AG04449 (cell line): ENCODE measurements at regions of chr7 and their contacts with region 1.

Region 1: DNA sequence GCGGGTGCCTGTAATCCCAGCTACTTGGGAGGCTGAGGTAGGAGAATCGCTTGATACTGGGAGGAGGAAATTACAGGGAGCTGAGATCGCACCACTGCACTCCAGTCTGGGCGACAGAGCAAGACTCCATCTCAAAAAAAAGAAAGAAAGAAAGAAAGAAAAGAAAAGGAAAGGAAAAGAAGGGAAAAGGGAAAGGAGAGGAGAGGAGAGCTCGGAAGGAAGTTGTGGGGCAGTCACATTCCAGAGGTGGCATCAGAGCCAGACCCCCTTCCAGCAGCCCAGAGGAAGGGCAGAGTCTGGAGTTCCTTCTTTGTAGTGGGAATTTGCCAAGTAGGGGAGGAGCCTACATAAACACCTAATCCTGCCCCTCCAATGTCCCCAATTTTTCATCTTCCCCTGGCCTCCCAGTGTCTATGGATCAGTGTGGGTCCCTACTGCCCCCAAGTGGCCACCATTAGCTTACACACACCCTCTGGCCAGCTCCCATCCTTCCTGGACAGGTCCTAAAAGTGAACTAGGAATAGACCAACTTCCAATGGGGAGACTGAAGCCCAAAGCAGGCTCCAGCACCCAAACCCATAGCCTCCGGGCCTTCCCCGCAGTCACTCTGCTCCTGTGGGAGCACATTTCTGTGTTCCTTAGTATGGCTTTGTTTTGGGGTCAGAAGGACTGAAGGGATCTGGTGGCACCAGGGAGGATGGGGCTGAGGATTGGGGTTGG is 39.6 kb upstream of the HSPB1 start:
- DNase-seq: no peak
- H3K4me3 ChIP-seq: no peak overlapping the region
- CTCF ChIP-seq: peak; percentile 85

Region 2: GRCh38 chr7:75951511-75951917 is 311.3 kb before region 1 on chr7:
- CTCF ChIA-PET with region 1: no interaction called
- POLR2A ChIA-PET with region 1: no interaction called
- DNase-seq: peak; percentile 33
- H3K4me3 ChIP-seq: no peak overlapping the region
- CTCF ChIP-seq: no peak

Region 3: GRCh38 chr7:76179686-76180085 is 83.2 kb before region 1 on chr7:
- CTCF ChIA-PET with region 1: interaction called, 53 read pairs
- POLR2A ChIA-PET with region 1: no interaction called
- DNase-seq: no peak
- H3K4me3 ChIP-seq: no peak overlapping the region
- CTCF ChIP-seq: no peak

Region 4: GRCh38 chr7:76252020-76252419 is 10.8 kb before region 1 on chr7:
- CTCF ChIA-PET with region 1: interaction called, 22 read pairs
- POLR2A ChIA-PET with region 1: interaction called, 3 read pairs
- DNase-seq: no peak
- H3K4me3 ChIP-seq: no peak overlapping the region
- CTCF ChIP-seq: no peak

Region 5: DNA sequence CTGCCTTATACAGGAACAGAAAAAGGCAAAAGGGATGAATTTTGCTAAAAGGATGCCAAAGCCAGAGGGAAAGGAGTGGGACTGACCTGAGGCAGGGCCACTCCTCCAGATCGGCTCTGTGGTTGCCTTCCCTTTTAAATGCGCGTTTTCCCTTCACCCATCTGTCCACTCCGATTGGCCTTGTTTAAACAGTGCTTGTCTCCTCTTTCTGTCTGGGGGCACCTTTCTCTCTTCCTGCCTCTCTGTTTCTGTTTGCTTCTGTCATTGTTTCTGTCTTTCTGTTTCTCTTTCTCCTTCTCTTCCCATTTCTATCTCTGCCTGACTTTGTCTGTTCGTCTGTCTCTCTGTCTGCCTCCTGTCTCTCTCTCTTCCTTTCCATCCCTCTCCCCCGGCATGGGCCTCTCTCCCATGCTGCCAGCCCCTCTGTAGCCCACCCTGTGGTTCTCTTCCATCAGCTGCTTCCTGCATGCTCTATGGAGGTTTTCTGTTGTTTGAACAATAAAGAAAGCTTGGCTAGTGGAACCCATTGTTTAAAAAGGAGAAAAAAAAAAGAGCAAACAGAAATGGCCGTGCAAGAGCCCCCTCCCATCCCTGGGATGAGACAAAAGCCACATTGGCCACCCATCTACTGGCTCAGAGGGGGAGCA is 10.1 kb after region 1 on chr7:
- CTCF ChIA-PET with region 1: interaction called, 21 read pairs
- POLR2A ChIA-PET with region 1: no interaction called
- DNase-seq: no peak
- H3K4me3 ChIP-seq: no peak overlapping the region
- CTCF ChIP-seq: no peak

Region 6: GRCh38 chr7:76282344-76283253 is 19.8 kb after region 1 on chr7:
- CTCF ChIA-PET with region 1: interaction called, 21 read pairs
- POLR2A ChIA-PET with region 1: no interaction called
- DNase-seq: no peak
- H3K4me3 ChIP-seq: peak overlapping the region; percentile 41
- CTCF ChIP-seq: no peak

Region 7: DNA sequence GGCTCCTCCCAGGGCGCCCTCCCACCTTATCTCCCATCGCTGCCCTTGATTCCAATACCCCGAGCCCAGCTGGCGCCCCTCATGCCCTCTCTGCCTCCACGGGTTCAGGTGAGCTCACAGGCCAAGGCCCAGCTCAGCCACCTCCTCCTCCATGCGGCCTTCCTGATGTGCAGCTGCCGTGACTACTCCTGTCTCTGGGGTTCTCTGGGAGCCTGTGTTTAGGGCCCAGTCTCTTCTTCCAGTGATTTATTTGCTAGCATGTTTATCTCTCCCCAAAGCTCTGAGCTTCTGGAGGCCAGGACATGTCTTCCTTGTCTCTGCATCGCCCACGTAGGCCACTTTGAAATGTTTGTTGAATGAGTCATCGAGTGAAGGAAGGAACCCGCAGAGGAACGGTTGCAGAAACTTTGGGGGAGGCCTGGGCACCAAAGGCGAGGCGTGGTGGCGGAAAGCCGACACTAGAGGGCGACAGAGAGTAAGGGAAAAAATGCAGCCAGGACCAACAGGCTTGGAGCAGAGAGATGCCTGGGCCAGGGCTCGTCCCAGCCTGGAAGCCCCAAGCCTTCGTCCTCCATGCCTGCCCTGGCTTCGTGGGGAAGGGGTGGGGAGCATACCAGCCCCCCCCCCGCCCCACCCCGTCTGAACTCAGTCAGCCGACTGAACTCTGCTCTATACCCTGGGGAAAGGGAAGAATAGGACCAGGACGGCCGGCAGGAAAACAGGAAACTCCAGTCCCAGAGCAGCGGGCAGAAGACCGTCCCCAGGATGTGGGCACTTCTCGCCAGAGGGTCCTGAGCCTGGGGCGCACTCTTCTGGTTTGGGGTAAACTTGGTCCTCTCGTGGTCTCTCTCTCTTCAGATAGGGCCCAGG is 28.7 kb after region 1 on chr7:
- CTCF ChIA-PET with region 1: interaction called, 11 read pairs
- POLR2A ChIA-PET with region 1: no interaction called
- DNase-seq: peak; percentile 93
- H3K4me3 ChIP-seq: peak overlapping the region; percentile 36
- CTCF ChIP-seq: peak; percentile 89